Activated T-helper 2 cell treated with anti-CD3 and anti-CD28 coated beads, Interferon-gamma antibody, Interleukin-2, Interleukin-4, amounts not matched to agents 10 μg/mL and 5 μg/mL and 100 μg/mL, durations not matched to agents 14 hours and 24 hours and 36 hours (primary cell): ENCODE measurements at regions of chr16 and their contacts with region 1.

Region 1: GRCh38 chr16:19118938-19119431 is 5.2 kb downstream of the ITPRIPL2 start:
- DNase-seq: peak; percentile 21
- H3K4me3 Mint-ChIP-seq: peak overlapping the region; percentile 76
- H3K27ac Mint-ChIP-seq: peak overlapping the region; percentile 96
- H3K4me1 Mint-ChIP-seq: peaks cover 51% of the 10 kb centered on the region
- H3K27me3 Mint-ChIP-seq: no peaks in the 10 kb centered on the region

Region 2: GRCh38 chr16:19130852-19131810 is 12.1 kb after region 1 on chr16:
- intact Hi-C with region 1: loop called (anchors 1 kb)
- DNase-seq: no peak
- H3K4me3 Mint-ChIP-seq: peak overlapping the region; percentile 27
- H3K27ac Mint-ChIP-seq: peak overlapping the region; percentile 74
- H3K4me1 Mint-ChIP-seq: peaks cover 47% of the 10 kb centered on the region
- H3K27me3 Mint-ChIP-seq: no peaks in the 10 kb centered on the region

Region 3: GRCh38 chr16:19167710-19168370 is 48.9 kb after region 1 on chr16 and contains the start of gene SYT17:
- intact Hi-C with region 1: loop called (anchors 1 kb)
- DNase-seq: peak; percentile 40
- H3K4me3 Mint-ChIP-seq: peak within 1 kb of the TSS; percentile 33
- H3K27ac Mint-ChIP-seq: no peak within 1 kb of the TSS
- H3K4me1 Mint-ChIP-seq: no peaks in the 10 kb centered on the region
- H3K27me3 Mint-ChIP-seq: peaks cover 23% of the 10 kb centered on the region
- total RNA-seq, gene SYT17: 0.34 and 0.57 TPM in 2 replicates

Region 4: DNA sequence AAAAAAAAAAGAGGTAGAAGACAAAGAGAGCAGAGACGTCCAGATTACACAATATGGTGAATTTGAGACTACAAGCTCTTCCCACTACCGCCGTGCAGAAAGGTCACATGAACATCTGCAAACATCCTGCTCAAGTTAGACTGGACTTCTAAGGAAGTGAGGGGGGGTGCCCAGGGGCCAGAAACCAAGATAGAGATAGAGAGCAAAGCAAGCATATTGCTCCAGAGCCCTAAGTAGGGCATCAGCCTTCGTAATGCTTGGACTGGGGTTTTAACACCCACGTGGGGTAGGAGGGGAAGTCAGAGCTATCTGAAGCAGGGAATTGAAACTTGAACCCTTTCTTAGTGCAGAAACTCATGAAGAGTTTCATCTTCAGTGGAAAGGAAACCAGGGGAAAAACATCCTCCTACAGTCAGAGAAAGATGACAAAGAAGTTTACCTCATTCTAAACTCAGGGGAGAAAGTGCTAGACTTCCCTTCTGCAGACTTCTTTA is 175.2 kb after region 1 on chr16:
- intact Hi-C with region 1: loop called (anchors 1 kb)
- DNase-seq: peak; percentile 22
- H3K4me3 Mint-ChIP-seq: peak overlapping the region; percentile 17
- H3K27ac Mint-ChIP-seq: peak overlapping the region; percentile 83
- H3K4me1 Mint-ChIP-seq: peaks cover 30% of the 10 kb centered on the region
- H3K27me3 Mint-ChIP-seq: no peaks in the 10 kb centered on the region

Region 5: DNA sequence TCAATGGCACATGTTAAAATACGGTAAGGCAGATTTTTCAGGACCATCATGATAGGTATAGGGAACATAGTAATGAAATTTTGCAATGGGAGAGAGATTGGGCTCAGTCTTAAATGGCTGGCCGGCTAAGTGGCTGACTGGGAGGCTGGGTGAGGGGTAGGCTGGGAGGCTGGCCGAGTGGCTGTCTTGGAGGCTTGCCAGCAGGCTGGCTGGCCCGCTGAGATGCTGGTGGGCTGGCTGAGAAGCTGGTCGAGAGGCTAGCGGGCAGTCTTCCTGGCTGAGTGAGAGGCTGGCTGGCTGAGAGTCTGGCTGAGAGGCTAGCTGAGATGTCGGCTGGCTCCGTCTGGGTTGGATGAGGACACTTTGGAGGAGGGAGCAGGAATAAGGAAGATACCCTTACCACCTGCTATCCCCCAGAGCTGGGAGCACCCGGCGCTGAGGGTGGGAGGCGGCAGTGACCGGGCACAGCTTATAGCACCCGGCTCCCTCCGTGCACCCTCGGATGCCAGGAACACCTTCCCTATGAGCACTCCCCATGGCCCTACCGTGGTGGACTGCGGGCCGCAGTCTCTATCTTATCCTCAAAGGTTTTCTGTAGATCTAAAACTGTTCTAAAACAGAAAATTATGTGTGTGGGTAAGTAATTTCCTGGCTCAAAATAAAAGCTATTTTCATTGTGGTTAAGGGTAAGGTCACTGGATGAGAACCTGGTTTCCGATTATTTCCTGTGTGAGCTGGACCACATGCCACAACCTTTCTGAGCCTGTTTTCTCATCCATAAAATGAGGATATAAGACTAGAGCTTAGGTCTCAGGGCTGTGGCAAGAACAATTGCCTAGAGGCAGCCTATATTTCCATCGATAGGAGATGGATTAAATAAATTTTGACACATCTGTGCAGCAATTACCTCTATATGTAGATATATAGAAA is 264.2 kb after region 1 on chr16:
- intact Hi-C with region 1: loop called (anchors 2 kb)
- DNase-seq: peak; percentile 16
- H3K4me3 Mint-ChIP-seq: peak overlapping the region; percentile 32
- H3K27ac Mint-ChIP-seq: no peak overlapping the region
- H3K4me1 Mint-ChIP-seq: peaks cover 53% of the 10 kb centered on the region
- H3K27me3 Mint-ChIP-seq: peaks cover 26% of the 10 kb centered on the region